ENCODE measurements at regions of chr5 and their contacts with region 1.

Region 1: DNA sequence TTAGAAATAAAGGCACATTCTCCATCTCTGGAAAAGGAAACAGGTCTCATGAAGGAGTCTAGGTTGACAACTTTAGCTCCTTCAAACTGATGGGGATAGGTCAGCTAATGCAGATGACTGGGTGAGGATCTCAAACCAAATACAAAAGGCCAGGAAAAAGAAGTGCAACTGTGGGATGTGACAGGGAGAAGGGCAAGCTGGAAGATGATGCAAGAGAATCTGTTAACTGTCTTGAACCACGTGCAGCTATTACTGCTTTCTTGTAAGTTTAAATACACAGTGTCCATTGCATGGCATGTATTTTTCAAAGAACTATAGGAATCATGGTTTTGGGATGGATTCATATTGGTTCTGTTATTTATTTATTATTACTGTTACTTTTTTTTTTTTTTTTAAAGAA is 331.8 kb downstream of the NDUFS4 start:
- DNase-seq: no peak
- ATAC-seq: no peak
- H3K4me3 ChIP-seq: no peak overlapping the region
- H3K27ac ChIP-seq: no peak overlapping the region
- H3K4me1 ChIP-seq: no peaks in the 10 kb centered on the region
- H3K27me3 ChIP-seq: no peaks in the 10 kb centered on the region
- CTCF ChIP-seq: no peak

Region 2: DNA sequence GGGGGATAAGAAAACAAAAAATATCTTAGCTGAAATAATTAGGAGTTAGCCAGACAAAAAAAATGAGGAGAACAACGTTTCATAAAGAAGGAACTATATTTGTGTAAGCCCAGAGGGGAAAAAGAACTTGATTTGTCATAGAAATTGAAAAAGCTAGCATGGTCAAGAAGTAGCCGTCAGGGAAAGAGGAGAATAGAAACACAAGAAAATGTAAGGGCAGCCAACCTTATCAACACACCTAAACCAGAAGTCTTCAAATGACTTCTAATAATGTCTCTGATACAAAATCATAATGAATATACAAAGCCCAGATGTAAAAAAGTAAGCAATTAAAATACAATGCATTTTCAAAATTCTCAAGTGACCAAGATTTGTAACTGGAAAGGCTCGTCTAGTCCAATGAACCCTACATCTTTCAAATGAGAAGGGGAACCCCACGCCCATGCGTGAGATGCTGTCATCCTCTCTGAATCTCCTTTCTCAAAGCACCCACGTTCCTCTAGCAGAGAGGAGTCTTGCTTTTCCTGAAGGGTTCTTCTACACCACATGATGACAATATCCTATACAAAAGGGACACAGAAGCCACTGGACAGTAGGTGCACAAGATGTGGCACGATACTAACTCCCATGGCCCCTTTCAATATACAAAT is 314.5 kb after region 1 on chr5:
- CTCF ChIA-PET with region 1: no interaction called
- POLR2A ChIA-PET with region 1: interaction called, 22 read pairs
- intact Hi-C with region 1: no loop called
- DNase-seq: no peak
- ATAC-seq: no peak
- H3K4me3 ChIP-seq: no peak overlapping the region
- H3K27ac ChIP-seq: no peak overlapping the region
- H3K4me1 ChIP-seq: no peaks in the 10 kb centered on the region
- H3K27me3 ChIP-seq: no peaks in the 10 kb centered on the region
- CTCF ChIP-seq: no peak

Region 3: GRCh38 chr5:54263447-54263846 is 371.2 kb after region 1 on chr5:
- CTCF ChIA-PET with region 1: no interaction called
- POLR2A ChIA-PET with region 1: no interaction called
- intact Hi-C with region 1: no loop called
- DNase-seq: no peak
- ATAC-seq: no peak
- H3K4me3 ChIP-seq: no peak overlapping the region
- H3K27ac ChIP-seq: no peak overlapping the region
- H3K4me1 ChIP-seq: peaks cover 7% of the 10 kb centered on the region; the same call in 1 of the 2 replicates
- H3K27me3 ChIP-seq: no peaks in the 10 kb centered on the region
- CTCF ChIP-seq: no peak